ENCODE measurements at regions of chr16 and their contacts with region 1.

Region 1: DNA sequence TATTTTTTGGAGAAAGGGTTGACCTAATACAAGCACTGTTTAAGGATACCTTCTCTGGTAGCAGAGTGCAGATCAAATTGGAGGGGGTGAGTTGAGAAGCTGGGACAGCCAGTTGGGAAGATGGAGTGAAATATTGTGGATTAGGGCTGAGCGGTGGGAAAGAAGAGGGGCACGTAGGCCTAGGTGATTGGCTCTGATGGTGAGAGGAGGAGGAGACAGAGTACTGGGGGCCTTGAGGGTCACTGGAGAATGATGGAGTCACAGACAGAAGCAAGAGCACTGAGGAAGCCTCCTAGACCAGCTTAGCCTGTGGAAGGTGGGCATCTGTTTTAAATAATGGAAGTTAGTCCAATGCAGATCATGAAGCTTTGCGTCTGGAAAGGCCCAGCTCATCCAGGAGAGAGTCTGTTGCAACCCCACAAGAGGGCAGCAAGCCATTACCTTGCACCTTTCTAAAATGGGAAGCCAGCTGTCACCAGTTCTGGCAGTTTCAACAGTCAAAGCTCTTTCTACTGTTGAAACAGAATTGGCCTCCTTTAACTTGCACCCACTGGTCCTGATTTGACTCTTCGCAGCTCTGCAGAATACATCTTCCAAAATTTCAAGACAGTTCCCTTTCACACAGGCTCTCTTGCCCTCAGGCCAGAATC is 11.8 kb downstream of the SLC9A5 start:
- DNase-seq: peak; percentile 52
- ATAC-seq: peak; percentile 80
- H3K4me3 ChIP-seq: no peak overlapping the region
- H3K27ac ChIP-seq: no peak overlapping the region
- H3K4me1 ChIP-seq: no peaks in the 10 kb centered on the region
- H3K27me3 ChIP-seq: no peaks in the 10 kb centered on the region
- CTCF ChIP-seq: peak; percentile 75

Region 2: DNA sequence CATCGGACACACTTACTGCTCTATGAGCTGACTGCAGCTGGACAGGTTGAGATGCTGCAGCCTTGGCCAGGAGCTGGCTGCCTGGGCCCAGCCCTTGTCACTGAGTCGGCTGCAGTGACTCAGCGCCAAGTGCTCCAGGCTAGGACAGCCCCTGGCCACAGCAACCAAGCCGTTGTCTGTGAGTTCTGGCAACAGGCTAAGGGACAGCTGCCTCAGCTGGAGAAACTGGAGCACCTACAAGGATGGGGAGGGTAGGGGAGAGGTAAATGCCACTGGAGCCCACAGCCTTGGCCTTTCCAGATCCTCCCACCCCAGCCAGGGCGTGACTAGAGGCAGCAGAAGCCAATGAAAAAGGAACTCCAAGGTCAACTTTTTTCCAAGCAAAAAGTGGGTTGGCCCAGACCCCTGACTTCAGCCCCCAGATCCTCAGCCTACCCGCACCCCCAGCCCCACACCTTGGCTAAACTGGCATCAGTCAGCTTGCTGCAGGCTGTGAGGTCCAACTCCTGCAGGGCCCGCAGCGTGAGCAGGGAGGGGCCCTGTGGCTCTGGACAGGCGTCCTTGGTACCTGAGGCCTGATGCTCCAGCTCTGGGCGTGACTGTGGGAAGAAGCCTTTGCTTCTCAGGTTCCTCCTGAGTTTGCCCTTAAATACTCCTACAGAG is 52.6 kb before region 1 on chr16:
- CTCF ChIA-PET with region 1: no interaction called
- POLR2A ChIA-PET with region 1: no interaction called
- intact Hi-C with region 1: no loop called
- DNase-seq: peak; percentile 86
- ATAC-seq: peak; percentile 88
- H3K4me3 ChIP-seq: no peak overlapping the region
- H3K27ac ChIP-seq: peak overlapping the region; percentile 61
- H3K4me1 ChIP-seq: peaks cover 31% of the 10 kb centered on the region
- H3K27me3 ChIP-seq: no peaks in the 10 kb centered on the region
- CTCF ChIP-seq: no peak

Region 3: GRCh38 chr16:67246934-67247697 is 13.4 kb before region 1 on chr16 and contains the start of gene FHOD1:
- CTCF ChIA-PET with region 1: interaction called, 21 read pairs
- POLR2A ChIA-PET with region 1: no interaction called
- intact Hi-C with region 1: no loop called
- DNase-seq: peak; percentile 91
- ATAC-seq: peak; percentile 55
- H3K4me3 ChIP-seq: peak within 1 kb of the TSS; percentile 89
- H3K27ac ChIP-seq: peak within 1 kb of the TSS; percentile 88
- H3K4me1 ChIP-seq: peaks cover 51% of the 10 kb centered on the region
- H3K27me3 ChIP-seq: no peaks in the 10 kb centered on the region
- CTCF ChIP-seq: no peak
- total RNA-seq, gene FHOD1: 45.5 and 57.1 TPM in 2 replicates

Region 4: DNA sequence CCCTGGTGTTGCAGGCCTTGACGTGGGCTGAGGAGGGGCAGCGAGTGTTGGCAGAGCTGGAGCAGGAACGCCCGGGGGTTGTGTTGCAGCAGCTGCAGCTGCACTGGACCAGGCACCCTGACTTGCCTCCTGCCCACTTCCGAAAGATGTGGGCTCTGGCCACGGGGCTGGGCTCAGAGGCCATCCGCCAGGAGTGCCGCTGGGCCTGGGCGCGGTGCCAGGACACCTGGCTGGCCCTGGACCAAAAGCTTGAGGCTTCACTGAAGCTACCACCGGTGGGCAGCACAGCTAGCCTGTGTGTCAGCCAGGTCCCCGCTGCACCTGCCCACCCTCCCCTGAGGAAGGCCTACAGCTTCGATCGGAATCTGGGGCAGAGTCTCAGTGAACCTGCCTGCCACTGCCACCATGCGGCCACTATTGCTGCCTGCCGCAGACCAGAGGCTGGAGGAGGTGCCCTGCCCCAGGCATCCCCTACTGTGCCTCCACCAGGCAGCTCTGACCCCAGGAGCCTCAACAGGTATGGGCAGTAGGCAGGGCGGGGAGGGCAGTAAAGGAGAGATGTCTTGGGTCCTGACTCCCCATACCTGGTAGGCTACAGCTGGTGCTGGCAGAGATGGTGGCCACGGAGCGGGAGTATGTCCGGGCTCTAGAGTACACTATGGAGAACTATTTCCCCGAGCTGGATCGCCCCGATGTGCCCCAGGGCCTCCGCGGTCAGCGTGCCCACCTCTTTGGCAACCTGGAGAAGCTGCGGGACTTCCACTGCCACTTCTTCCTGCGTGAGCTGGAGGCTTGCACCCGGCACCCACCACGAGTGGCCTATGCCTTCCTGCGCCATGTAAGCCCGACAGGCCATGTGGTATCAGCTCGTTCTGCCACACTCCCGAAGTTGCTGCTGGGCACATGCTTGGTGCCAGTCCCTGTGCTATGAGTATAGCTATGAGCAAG is 24.4 kb after region 1 on chr16:
- CTCF ChIA-PET with region 1: interaction called, 18 read pairs
- POLR2A ChIA-PET with region 1: no interaction called
- intact Hi-C with region 1: no loop called
- DNase-seq: peak; percentile 54
- ATAC-seq: peak; percentile 87
- H3K4me3 ChIP-seq: no peak overlapping the region
- H3K27ac ChIP-seq: no peak overlapping the region
- H3K4me1 ChIP-seq: no peaks in the 10 kb centered on the region
- H3K27me3 ChIP-seq: no peaks in the 10 kb centered on the region
- CTCF ChIP-seq: peak; percentile 60; the same call in 1 of the 2 replicates

Region 5: GRCh38 chr16:67339453-67339852 is 78.9 kb after region 1 on chr16:
- CTCF ChIA-PET with region 1: interaction called, 13 read pairs
- POLR2A ChIA-PET with region 1: interaction called, 4 read pairs
- intact Hi-C with region 1: loop called (anchors 1 kb)
- DNase-seq: peak; percentile 31
- ATAC-seq: peak; percentile 51
- H3K4me3 ChIP-seq: no peak overlapping the region
- H3K27ac ChIP-seq: no peak overlapping the region
- H3K4me1 ChIP-seq: no peaks in the 10 kb centered on the region; the same call in 1 of the 2 replicates
- H3K27me3 ChIP-seq: no peaks in the 10 kb centered on the region
- CTCF ChIP-seq: peak; percentile 45

Region 6: DNA sequence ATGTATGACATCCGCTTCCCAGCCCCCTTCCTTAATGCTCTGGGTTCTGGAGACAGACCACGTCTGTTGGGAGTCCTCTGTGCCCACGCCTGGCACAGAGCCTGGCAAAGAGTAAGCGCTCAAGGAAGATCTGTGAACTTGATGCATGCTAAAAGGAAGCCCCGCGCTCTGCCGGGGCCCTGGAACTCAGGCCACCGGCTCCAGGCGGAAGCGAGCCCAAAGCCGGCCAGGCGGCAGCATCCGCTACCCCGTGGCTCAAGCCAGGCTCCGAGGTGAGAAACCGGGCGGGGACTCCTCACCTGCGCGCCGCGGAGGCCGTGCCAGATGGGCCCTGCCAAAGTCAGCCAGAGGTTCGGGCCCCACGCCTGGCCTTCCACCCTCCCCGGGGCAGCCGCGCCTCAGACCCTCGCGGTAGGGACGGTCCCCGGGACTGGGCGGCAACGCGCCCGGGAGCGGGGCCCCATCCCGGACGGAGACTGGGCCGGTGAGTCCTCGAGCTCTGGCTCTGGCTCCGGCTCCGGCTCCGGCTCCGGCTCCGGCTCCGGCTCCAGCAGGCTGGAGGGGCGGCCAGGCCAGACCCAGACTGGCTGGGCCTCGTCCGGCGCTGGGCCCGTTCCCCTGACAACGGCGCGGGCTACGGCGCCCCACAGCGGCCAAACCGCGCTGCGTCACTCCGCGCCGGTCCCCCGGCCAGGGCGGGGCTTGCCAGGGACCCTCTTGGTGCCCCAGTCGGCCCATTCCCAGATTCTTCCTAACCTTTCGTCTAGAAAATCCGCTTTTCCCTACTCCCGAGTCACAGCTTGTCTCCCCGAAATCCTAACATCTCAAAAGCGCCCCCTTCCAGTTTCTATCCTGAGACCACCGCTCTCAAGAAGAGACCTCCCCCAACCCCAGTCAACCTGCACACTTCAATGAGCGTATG is 155.6 kb after region 1 on chr16 and contains the start of gene ZDHHC1:
- CTCF ChIA-PET with region 1: no interaction called
- POLR2A ChIA-PET with region 1: no interaction called
- intact Hi-C with region 1: loop called (anchors 5 kb)
- DNase-seq: peak; percentile 61
- ATAC-seq: peak; percentile 95
- H3K4me3 ChIP-seq: peak within 1 kb of the TSS; percentile 73
- H3K27ac ChIP-seq: 0 out of 2 replicates have a peak within 1 kb of the TSS, but pooled peaks have one; percentile 1
- H3K4me1 ChIP-seq: peaks cover 8% of the 10 kb centered on the region; the same call in 1 of the 2 replicates
- H3K27me3 ChIP-seq: no peaks in the 10 kb centered on the region
- CTCF ChIP-seq: peak; percentile 59
- total RNA-seq, gene ZDHHC1: 4.8 and 5.1 TPM in 2 replicates

Measured in PC-3 (cell line).